ENCODE measurements at regions of chr22 and their contacts with region 1.

Region 1: GRCh38 chr22:40177738-40178416 is at the start of gene TNRC6B:
- DNase-seq: peak; percentile 84
- H3K4me3 Mint-ChIP-seq: peak within 1 kb of the TSS; percentile 89
- H3K27ac Mint-ChIP-seq: peak within 1 kb of the TSS; percentile 92
- H3K4me1 Mint-ChIP-seq: peaks cover 54% of the 10 kb centered on the region
- H3K27me3 Mint-ChIP-seq: no peaks in the 10 kb centered on the region
- total RNA-seq, gene TNRC6B: 34.9 to 38.8 TPM

Region 2: GRCh38 chr22:39917776-39918495 is 259.9 kb before region 1 on chr22:
- CTCF ChIA-PET with region 1: no interaction called
- POLR2A ChIA-PET with region 1: no interaction called
- intact Hi-C with region 1: loop called (anchors 5 kb)
- DNase-seq: no peak
- H3K4me3 Mint-ChIP-seq: peak overlapping the region; percentile 68
- H3K27ac Mint-ChIP-seq: peak overlapping the region; percentile 93
- H3K4me1 Mint-ChIP-seq: peaks cover 84% of the 10 kb centered on the region
- H3K27me3 Mint-ChIP-seq: no peaks in the 10 kb centered on the region

Region 3: GRCh38 chr22:40055143-40055883 is 122.6 kb before region 1 on chr22:
- CTCF ChIA-PET with region 1: interaction called, 3 read pairs
- POLR2A ChIA-PET with region 1: interaction called, 26 read pairs
- intact Hi-C with region 1: loop called (anchors 1 kb)
- DNase-seq: peak; percentile 44
- H3K4me3 Mint-ChIP-seq: peak overlapping the region; percentile 77
- H3K27ac Mint-ChIP-seq: peak overlapping the region; percentile 97
- H3K4me1 Mint-ChIP-seq: peaks cover 78% of the 10 kb centered on the region
- H3K27me3 Mint-ChIP-seq: no peaks in the 10 kb centered on the region

Region 4: GRCh38 chr22:40116496-40117200 is 61.2 kb before region 1 on chr22:
- CTCF ChIA-PET with region 1: no interaction called
- POLR2A ChIA-PET with region 1: no interaction called
- intact Hi-C with region 1: loop called (anchors 2 kb)
- DNase-seq: peak; percentile 59
- H3K4me3 Mint-ChIP-seq: no peak overlapping the region
- H3K27ac Mint-ChIP-seq: peak overlapping the region; percentile 73
- H3K4me1 Mint-ChIP-seq: peaks cover 66% of the 10 kb centered on the region
- H3K27me3 Mint-ChIP-seq: no peaks in the 10 kb centered on the region

Region 5: DNA sequence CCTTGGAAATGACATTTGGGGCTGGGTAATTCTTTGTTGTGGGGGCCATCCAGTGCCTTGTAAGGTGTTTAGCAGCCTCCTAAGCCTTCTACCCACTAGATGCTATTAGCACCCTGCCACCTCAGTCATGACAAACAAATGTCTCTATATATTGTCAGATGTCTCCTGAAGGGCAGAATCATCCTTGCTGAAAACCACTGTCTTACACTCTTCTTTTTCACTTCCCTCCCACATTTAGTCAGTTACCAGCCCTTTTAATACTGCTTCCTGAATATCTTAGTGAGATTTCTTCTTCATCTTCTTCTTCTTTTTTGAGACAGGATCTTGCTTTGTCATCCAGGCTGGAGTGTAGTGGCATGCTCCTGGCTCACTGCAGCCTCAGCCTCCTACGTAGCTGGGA is 32.9 kb after region 1 on chr22:
- CTCF ChIA-PET with region 1: no interaction called
- POLR2A ChIA-PET with region 1: interaction called, 3 read pairs
- intact Hi-C with region 1: loop called (anchors 5 kb)
- DNase-seq: no peak
- H3K4me3 Mint-ChIP-seq: no peak overlapping the region
- H3K27ac Mint-ChIP-seq: peak overlapping the region; percentile 60
- H3K4me1 Mint-ChIP-seq: peaks cover 69% of the 10 kb centered on the region
- H3K27me3 Mint-ChIP-seq: no peaks in the 10 kb centered on the region

Region 6: GRCh38 chr22:40289991-40290459 is 112.1 kb after region 1 on chr22:
- CTCF ChIA-PET with region 1: no interaction called
- POLR2A ChIA-PET with region 1: interaction called, 3 read pairs
- intact Hi-C with region 1: loop called (anchors 2 kb)
- DNase-seq: peak; percentile 80
- H3K4me3 Mint-ChIP-seq: peak overlapping the region; percentile 51
- H3K27ac Mint-ChIP-seq: peak overlapping the region; percentile 95
- H3K4me1 Mint-ChIP-seq: peaks cover 63% of the 10 kb centered on the region
- H3K27me3 Mint-ChIP-seq: no peaks in the 10 kb centered on the region

Region 7: DNA sequence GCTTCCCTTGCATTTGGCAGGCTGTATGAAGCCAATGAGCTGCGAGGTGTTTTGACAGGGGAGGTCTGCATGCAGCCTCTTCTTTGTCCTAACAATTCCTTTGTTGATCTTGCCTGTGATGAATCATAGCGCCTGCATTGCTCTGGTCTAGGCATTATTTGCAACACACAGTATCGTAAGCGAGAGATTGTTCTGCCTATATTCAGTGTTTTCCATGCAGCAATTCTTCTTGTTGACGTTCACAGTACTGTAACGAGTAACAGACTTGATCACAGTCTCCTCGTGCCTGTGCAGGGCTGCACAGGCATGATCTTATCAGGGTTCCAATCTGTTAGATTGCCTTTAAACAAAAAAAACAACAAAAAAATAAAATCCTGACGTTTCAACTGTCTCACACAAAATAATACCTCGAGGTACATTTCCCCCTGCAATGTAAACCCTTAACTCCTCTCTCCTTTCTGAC is 154.5 kb after region 1 on chr22:
- CTCF ChIA-PET with region 1: no interaction called
- POLR2A ChIA-PET with region 1: no interaction called
- intact Hi-C with region 1: loop called (anchors 1 kb)
- DNase-seq: peak; percentile 44
- H3K4me3 Mint-ChIP-seq: peak overlapping the region; percentile 49
- H3K27ac Mint-ChIP-seq: peak overlapping the region; percentile 80
- H3K4me1 Mint-ChIP-seq: peaks cover 91% of the 10 kb centered on the region
- H3K27me3 Mint-ChIP-seq: no peaks in the 10 kb centered on the region

Region 8: DNA sequence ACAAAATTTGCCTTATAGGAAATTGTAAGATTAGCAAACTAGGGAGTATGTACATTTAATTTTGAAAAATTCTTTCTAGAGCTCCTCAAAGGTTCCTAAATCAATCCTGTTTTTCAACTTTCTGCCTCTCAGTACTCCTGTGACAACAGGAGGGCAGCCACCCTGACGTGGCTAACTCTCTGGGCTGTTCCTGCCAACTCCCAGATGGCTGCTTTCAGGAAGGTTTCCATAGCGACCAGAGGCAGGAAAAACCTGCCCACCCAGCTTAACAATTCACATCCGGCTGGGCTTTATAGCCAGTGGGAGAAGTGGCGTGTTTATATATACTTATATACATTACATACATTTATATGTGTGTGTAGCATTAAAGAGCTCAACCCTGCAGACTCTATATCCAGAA is 219.0 kb after region 1 on chr22:
- CTCF ChIA-PET with region 1: no interaction called
- POLR2A ChIA-PET with region 1: no interaction called
- intact Hi-C with region 1: no loop called
- DNase-seq: no peak
- H3K4me3 Mint-ChIP-seq: no peak overlapping the region
- H3K27ac Mint-ChIP-seq: no peak overlapping the region
- H3K4me1 Mint-ChIP-seq: peaks cover 48% of the 10 kb centered on the region
- H3K27me3 Mint-ChIP-seq: no peaks in the 10 kb centered on the region

Measured in activated CD4-positive, alpha-beta memory T cell treated with anti-CD3 and anti-CD28 coated beads for 36 hours (primary cell).